GM10248 (cell line): ENCODE measurements at regions of chr2 and their contacts with region 1.

Region 1: GRCh38 chr2:120174963-120175581 is 48.1 kb downstream of the TMEM185B start:
- DNase-seq: peak; percentile 53
- CTCF ChIP-seq: peak; percentile 59

Region 2: GRCh38 chr2:119697290-119698020 is 477.6 kb before region 1 on chr2:
- CTCF ChIA-PET with region 1: interaction called, 82 read pairs
- POLR2A ChIA-PET with region 1: no interaction called
- DNase-seq: peak; percentile 58
- CTCF ChIP-seq: no peak

Region 3: GRCh38 chr2:119739580-119740255 is 435.4 kb before region 1 on chr2:
- CTCF ChIA-PET with region 1: interaction called, 15 read pairs
- POLR2A ChIA-PET with region 1: no interaction called
- DNase-seq: no peak
- CTCF ChIP-seq: no peak

Region 4: GRCh38 chr2:119759451-119760236 is 415.4 kb before region 1 on chr2 and contains the start of gene PTPN4:
- CTCF ChIA-PET with region 1: interaction called, 100 read pairs
- POLR2A ChIA-PET with region 1: interaction called, 3 read pairs
- DNase-seq: peak; percentile 96
- CTCF ChIP-seq: no peak

Region 5: DNA sequence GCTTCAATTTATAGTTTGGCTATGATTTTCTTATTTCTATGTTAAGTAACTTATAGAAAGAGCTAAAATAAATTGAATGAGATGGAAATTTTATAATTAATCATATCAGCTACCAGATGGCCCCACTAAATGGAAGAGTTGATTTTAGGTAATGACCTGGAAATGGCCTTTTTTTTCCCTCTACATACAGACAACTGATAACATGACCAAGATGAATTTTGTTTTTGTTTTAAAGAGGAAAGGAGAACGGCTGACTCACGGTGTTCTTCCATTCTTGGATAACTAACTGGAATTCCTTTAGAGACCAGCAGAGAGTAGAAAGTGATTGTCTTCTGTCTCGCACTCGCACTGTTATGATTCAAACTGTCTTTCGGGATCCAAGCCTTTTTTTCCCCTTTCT is 42.9 kb before region 1 on chr2:
- CTCF ChIA-PET with region 1: interaction called, 10 read pairs
- POLR2A ChIA-PET with region 1: no interaction called
- DNase-seq: no peak
- CTCF ChIP-seq: no peak

Region 6: DNA sequence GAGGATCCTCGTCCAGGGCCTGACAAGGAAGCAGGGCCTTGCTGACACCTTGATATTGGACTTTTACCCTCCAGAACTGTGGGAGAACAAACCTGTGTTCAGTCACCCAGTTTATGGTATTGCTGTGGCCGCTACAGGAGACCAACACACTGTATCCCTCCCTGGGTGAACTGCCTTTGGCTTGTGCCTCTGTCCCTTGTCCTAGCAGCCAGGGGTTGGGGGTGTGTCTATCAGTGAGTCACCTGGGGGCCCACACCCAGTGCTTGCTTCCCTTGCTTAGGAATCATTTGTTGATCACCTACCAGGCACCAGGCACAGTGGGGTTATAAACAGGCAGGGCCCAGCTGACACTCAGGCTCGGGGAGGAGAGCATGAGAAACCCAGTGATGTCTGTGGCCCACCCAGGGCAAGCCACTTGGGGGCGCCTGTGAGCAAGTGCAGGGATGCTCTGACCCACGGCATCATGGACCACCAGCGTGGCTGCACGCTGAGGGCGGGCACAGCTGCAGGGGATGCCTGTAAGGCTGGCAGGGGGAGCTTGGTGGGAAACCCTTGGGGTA is 31.0 kb after region 1 on chr2:
- CTCF ChIA-PET with region 1: interaction called, 16 read pairs
- POLR2A ChIA-PET with region 1: no interaction called
- DNase-seq: peak; percentile 62
- CTCF ChIP-seq: peak; percentile 47

Region 7: DNA sequence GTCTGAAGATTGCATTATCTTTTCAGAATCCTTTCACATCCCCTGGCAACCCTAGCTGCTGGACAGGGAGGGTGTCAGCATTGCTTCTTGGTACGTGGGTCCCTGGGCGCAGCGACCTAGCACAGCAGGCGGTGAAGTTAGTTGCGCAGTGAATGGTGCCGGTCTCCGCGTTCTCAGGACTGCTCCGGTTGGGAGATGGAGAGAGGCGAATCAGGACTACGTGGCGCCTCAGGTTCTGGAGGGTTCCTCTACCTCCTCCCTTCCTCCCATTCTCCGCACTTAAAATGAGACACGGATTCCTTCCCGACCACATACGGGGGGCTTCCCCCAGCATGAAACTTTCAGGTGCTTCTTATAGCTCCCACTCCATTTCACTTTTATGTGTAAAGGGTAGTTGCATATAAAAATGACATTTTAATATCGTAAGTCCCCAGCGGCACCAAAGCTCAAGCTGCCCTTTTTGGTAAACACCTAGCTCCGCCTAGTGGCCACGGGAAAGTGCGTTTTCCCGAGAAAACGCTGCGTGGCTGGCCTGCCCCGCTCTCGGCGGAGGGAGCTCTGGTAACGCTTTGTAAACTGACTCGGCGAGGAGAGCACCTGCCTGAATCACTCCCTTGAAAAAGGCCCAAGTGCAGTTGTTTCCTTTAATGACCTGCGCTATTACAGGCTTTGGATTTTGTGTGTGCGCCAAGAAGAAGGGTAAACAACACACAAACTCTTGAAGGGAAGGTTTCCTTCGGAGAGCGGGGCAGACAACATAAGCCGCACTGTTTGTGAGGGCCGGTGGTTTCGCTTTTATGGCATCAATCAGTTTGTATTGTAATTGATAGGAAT is 138.0 kb after region 1 on chr2:
- CTCF ChIA-PET with region 1: interaction called, 40 read pairs
- POLR2A ChIA-PET with region 1: no interaction called
- DNase-seq: peak; percentile 78
- CTCF ChIP-seq: peak; percentile 93

Region 8: DNA sequence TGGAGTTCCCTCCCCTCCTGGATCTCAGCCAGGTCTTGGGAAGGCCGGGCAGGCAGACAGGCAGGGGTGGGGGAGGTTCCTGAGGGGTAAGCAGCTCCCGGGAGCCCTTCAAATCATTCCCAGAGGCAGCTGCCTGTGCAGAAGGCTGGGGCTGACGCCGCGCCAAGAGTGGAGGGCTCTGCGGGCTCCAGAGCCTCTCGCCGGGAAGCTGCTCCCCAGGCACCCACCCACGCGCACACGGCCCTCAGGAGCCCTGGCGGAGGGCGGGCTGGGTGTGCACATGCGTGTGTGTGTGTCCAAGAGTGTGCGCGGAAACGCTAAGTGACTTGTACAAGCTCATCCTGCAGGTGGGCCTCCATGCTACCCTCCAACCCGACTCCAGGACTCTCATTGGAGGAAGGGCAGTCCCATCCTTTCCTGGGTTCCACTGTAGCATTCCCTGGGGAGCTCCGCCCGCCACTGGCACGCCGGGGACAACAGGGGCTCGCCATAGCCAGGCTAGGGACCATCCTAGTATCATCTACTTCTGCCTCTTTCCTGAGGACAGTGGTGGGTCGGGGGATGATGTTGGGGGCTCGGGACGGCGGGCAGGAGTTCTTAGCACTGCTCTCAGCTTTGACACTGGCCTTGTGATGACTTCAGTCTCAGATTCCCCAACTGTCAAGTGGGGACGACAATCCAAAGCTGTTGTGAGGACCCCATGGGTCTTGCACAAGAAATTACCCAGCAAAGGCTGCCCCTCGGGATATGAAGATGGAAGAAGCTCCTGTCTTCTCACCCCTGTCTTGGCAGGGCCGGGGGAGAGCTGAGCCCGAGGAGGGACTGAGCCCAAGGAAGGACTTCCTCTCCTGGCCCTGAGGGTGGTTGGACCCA is 221.2 kb after region 1 on chr2:
- CTCF ChIA-PET with region 1: no interaction called
- POLR2A ChIA-PET with region 1: no interaction called
- DNase-seq: no peak
- CTCF ChIP-seq: no peak